Activated T-helper 1 cell treated with anti-CD3 and anti-CD28 coated beads, Interleukin-12 subunit alpha, Interleukin-12 subunit beta, Interleukin-2, Interleukin-4 antibody, amounts not matched to agents 30 ng/mL and 10 ng/mL and 1 ng/mL, durations not matched to agents 14 hours and 24 hours and 36 hours (primary cell): ENCODE measurements at regions of chr17 and their contacts with region 1.

Region 1: DNA sequence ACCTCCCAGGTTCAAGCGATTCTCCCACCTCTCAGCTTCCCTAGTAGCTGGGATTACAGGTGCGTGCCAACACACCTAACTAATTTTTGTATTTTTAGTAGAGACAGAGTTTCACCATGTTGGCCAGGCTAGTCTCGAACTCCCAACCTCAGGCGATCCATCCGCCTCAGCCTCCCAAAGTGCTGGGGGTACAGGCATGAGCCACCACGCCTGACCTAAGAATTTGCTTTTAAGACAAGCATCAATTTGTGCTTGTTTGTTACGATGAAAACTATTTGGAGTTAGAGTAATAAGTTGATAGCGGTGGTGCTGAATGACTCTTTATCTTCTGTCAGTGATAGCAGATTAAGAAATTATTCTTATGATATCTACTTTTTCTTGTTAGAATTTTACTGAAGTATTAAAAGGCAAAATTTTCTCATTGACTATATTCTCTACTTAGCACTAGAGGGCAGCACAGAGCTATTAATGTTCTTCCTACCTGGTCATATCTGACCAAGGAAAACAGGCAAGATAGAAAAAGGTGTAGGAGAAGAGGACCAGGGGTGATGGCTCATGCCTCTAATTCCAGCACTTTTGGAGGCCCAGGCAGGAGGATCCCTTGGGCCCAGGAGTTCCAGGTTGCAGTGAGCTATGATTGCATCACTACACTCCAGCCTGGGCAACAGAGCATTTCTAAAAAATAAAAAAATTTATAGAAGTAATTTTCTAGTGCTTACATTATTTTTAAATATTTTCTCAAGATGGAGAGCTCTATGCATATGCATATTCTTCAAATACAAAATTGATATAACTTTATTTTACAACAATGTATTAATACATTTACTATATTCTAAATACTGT is 24.5 kb downstream of the STXBP4 start:
- DNase-seq: no peak
- H3K4me3 Mint-ChIP-seq: no peak overlapping the region
- H3K27ac Mint-ChIP-seq: no peak overlapping the region
- H3K4me1 Mint-ChIP-seq: peaks cover 4% of the 10 kb centered on the region
- H3K27me3 Mint-ChIP-seq: no peaks in the 10 kb centered on the region

Region 2: DNA sequence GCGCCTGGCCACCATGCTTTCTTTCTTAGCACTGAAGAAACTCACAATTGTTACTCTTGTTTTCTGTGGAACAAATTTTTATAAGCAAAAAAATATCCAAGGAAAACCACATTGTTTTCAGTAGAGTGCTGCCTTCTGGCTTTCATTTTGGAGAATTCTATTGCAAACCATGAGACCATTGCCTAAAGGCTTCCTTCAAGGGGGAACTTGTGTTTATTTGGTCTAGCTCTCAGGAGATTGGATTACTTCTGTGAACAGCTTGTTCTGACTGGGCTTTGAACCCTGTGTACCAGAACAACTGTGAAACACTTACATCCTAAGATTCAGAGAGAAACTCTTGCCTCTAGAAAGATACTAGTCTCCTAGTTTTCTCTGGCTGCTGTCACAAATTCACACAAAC is 60.3 kb before region 1 on chr17:
- intact Hi-C with region 1: no loop called
- DNase-seq: no peak
- H3K4me3 Mint-ChIP-seq: no peak overlapping the region
- H3K27ac Mint-ChIP-seq: no peak overlapping the region
- H3K4me1 Mint-ChIP-seq: no peaks in the 10 kb centered on the region
- H3K27me3 Mint-ChIP-seq: peaks cover 6% of the 10 kb centered on the region

Region 3: GRCh38 chr17:55023626-55024025 is 30.6 kb after region 1 on chr17:
- intact Hi-C with region 1: no loop called
- DNase-seq: no peak
- H3K4me3 Mint-ChIP-seq: no peak overlapping the region
- H3K27ac Mint-ChIP-seq: no peak overlapping the region
- H3K4me1 Mint-ChIP-seq: no peaks in the 10 kb centered on the region
- H3K27me3 Mint-ChIP-seq: no peaks in the 10 kb centered on the region

Region 4: DNA sequence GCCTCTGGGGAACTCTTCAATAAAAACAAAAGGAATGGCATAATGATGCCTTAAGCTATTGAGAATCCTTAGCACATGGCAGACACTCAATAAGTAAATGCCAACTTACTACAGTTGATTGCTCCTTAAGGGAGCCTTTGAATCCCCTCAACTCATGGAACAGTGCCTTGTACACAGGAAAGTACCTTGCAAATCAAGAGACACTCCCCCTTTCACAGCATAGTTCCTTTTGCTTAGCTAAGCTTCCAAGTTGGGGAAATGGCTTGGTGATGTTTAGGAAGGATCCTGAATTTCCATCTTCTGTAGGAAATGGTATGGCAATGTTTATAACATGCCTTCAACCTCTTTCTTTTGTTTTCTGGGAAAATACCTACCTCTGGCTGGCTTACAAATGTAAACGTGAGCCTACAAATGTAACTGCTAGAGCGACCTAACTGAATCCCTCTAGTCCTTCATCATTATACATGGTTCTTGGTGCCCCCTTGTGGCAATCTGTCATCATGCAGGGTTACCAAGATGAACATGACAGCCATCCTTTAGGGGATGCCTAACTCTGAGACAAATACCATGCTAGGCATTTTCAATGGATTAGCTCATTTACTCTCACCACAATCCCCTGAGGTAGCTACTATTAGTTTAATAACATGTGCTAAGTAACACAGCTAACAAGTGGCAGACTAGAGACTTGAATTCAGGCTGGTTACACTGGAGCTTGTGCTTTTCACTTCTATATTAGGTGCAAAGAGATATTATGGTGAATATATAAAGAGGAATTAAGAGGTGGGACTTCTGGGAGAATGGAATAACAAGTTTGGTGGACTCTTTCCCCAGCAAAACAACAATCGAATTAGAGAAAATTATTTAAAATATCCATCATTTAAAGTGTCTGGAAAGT is 363.7 kb after region 1 on chr17:
- intact Hi-C with region 1: loop called (anchors 1 kb)
- DNase-seq: peak; percentile 51
- H3K4me3 Mint-ChIP-seq: no peak overlapping the region
- H3K27ac Mint-ChIP-seq: no peak overlapping the region
- H3K4me1 Mint-ChIP-seq: no peaks in the 10 kb centered on the region
- H3K27me3 Mint-ChIP-seq: peaks cover 21% of the 10 kb centered on the region

Region 5: DNA sequence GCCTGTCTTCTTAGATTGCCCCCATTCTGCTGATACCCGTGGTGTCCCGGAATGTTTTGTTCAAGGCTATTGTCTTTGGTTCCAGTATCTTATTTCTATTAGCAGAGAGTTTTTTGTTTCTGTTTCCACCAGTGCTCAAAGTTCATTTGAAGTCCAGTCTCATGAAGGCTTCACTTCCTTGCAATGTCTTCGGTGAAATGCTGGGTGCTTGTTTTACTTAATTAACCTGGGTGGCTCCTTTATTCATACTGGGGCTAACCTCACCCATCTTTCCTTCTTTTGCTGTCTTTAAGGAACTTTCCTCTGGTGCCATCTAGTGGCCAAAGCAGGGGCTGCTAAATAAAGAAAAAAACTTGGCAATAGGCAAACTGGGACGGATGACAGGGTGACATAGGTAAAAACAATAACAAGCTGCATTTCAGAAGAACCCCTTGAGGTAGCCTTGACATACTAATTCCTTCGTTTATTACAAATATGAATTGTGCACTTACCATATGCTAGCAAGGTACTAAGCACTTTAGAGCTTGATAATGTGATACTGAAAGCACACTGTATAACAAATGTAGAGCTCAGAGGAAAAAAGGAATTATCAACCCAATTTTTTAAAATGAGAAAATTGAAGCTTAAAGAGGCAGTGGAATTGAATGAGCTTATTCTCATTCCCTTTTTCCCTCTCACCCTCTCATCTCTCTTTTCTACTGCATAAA is 521.0 kb after region 1 on chr17:
- intact Hi-C with region 1: loop called (anchors 2 kb)
- DNase-seq: peak; percentile 56
- H3K4me3 Mint-ChIP-seq: no peak overlapping the region
- H3K27ac Mint-ChIP-seq: no peak overlapping the region
- H3K4me1 Mint-ChIP-seq: peaks cover 4% of the 10 kb centered on the region
- H3K27me3 Mint-ChIP-seq: peaks cover 9% of the 10 kb centered on the region